ENCODE measurements at regions of chr6 and their contacts with region 1.

Region 1: GRCh38 chr6:89297695-89298351 is 17.3 kb downstream of the GABRR2 start:
- DNase-seq: peak in 30 of 35 experiments; percentile 10 to 66 (median 34)
- ATAC-seq: peak; percentile 63 to 91 (median 72)
- H3K4me3 ChIP-seq: peak overlapping the region in 1 of 2 donors; percentile 14
- H3K4me3 Mint-ChIP-seq: peak overlapping the region; percentile 33 to 64 (median 53)
- H3K27ac ChIP-seq: peak overlapping the region; percentile 83
- H3K27ac Mint-ChIP-seq: peak overlapping the region; percentile 91 to 92
- H3K4me1 ChIP-seq: peaks cover 9 to 27% of the 10 kb centered on the region in 2 experiments
- H3K4me1 Mint-ChIP-seq: peaks cover 12 to 26% (median 21%) of the 10 kb centered on the region in 3 donors
- H3K27me3 ChIP-seq: no peaks in the 10 kb centered on the region
- H3K27me3 Mint-ChIP-seq: no peaks in the 10 kb centered on the region

Region 2: DNA sequence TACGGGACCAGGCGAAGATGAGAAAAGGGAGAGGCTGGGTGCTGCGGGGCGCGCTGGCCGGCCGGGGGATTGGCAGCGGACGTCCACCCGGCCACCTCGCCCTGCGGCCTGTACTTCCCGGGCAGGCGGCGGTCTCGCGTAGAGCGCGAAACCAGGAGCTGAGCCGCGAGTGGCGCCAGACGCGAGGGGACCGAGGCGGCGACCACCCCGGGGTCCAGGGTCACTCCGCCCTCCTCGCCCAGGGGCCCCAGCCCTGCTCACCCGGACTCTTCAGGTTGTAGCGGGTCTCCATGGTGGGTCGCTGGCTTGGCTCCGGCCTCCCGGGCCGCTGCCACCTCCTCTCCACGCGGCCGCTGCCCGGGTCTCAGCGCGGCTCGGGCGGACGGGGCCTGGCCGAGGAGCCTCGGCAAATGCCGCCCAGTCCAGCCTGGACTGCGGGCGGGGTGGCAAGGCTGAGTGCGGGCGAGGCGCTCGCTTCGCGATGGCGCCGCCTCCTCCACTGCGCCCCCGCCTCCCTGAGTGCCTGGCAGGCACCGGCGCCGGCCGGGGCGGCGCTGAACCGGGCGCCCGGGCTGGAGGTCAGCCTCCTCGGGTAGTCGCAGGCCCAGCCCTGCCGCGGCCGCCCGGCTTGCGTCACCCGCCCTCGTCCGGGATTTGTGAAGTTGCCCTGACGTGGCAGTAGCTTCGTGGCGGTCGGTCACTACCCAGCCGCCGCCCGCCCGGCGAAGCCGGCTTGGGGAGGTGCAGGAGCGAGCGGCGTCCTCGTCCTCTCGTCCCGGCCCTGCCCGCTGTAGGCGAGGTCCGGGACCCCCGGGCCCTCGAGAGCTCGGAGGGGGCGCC is 54.7 kb after region 1 on chr6 and contains the start of gene UBE2J1:
- CTCF ChIA-PET with region 1: interaction called in 1 of 2 experiments, 3 read pairs
- POLR2A ChIA-PET with region 1: interaction called in 1 of 2 experiments, 17 read pairs
- DNase-seq: peak; percentile 34 to 80 (median 60)
- ATAC-seq: peak; percentile 79 to 87 (median 85)
- H3K4me3 ChIP-seq: peak within 1 kb of the TSS; percentile 66 to 92
- H3K4me3 Mint-ChIP-seq: peak within 1 kb of the TSS; percentile 94 to 99 (median 96)
- H3K27ac ChIP-seq: peak within 1 kb of the TSS; percentile 71
- H3K27ac Mint-ChIP-seq: peak within 1 kb of the TSS; percentile 97 to 98
- H3K4me1 ChIP-seq: peaks cover 24 to 36% of the 10 kb centered on the region in 2 experiments
- H3K4me1 Mint-ChIP-seq: peaks cover 69 to 76% (median 71%) of the 10 kb centered on the region in 3 donors
- H3K27me3 ChIP-seq: no peaks in the 10 kb centered on the region
- H3K27me3 Mint-ChIP-seq: no peaks in the 10 kb centered on the region
- total RNA-seq, gene UBE2J1: 14.6 to 24.1 (median 22.6) TPM

Region 3: GRCh38 chr6:89655122-89655521 is 357.3 kb after region 1 on chr6:
- CTCF ChIA-PET with region 1: no interaction called
- POLR2A ChIA-PET with region 1: interaction called in 1 of 2 experiments, 26 read pairs
- DNase-seq: no peak
- ATAC-seq: no peak
- H3K4me3 ChIP-seq: no peak overlapping the region
- H3K4me3 Mint-ChIP-seq: no peak overlapping the region
- H3K27ac ChIP-seq: no peak overlapping the region
- H3K27ac Mint-ChIP-seq: no peak overlapping the region
- H3K4me1 ChIP-seq: no peaks in the 10 kb centered on the region
- H3K4me1 Mint-ChIP-seq: no peaks in the 10 kb centered on the region
- H3K27me3 ChIP-seq: no peaks in the 10 kb centered on the region
- H3K27me3 Mint-ChIP-seq: no peaks in the 10 kb centered on the region